ENCODE measurements at regions of chr18 and their contacts with region 1.

Region 1: GRCh38 chr18:37537868-37538525 is 27.6 kb downstream of the CELF4 start:
- DNase-seq: peak; percentile 76 to 87 (median 84)
- ATAC-seq: peak; percentile 96
- H3K4me3 ChIP-seq: no peak overlapping the region
- H3K27ac ChIP-seq: no peak overlapping the region
- H3K4me1 ChIP-seq: peaks cover 0 to 5% of the 10 kb centered on the region in 2 experiments; a peak in 1 of 5 replicates
- H3K27me3 ChIP-seq: peaks cover 0 to 19% of the 10 kb centered on the region in 2 experiments; a peak in 2 of 5 replicates
- CTCF ChIP-seq: peak; percentile 77 to 82 (median 82)
- EP300 ChIP-seq: no peak
- POLR2A ChIP-seq: no peak
- RAD21 ChIP-seq: peak; percentile 49 to 70

Region 2: DNA sequence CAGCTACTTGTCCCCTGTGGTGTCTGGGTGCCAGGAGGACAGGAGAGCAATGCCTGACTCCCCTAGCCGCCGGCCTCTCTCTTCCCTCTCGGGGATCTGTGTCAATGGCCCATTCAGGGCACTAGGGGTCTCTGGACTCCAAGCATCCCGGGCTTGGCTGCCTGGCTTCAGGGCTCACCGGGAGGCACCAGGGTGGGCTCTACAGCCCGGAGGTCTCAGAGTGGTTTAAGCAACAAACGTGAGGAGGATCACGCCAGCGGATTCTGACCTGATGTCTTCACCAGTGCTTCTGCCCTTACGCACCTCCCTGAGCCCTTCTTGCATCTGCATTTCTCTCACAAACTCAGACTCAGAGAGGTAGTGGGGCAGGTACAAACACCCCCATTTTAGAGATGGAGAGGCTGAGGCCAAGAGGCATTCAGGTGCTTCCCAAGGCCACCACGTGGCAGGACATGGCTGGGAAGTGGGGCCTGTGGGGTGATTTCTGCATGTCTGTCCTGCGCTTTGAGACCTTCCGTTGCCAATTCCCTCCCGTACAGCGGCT is 215.4 kb before region 1 on chr18:
- CTCF ChIA-PET with region 1: no interaction called
- POLR2A ChIA-PET with region 1: no interaction called
- in situ Hi-C with region 1: no loop called
- intact Hi-C with region 1: loop called (anchors 10 kb)
- DNase-seq: peak; percentile 68 to 78 (median 74)
- ATAC-seq: peak; percentile 91
- H3K4me3 ChIP-seq: no peak overlapping the region
- H3K27ac ChIP-seq: no peak overlapping the region
- H3K4me1 ChIP-seq: peaks cover 0 to 8% of the 10 kb centered on the region in 2 experiments; a peak in 1 of 5 replicates
- H3K27me3 ChIP-seq: peaks cover 0 to 44% of the 10 kb centered on the region in 2 experiments; a peak in 3 of 5 replicates
- CTCF ChIP-seq: peak; percentile 77 to 94 (median 85)
- EP300 ChIP-seq: no peak
- POLR2A ChIP-seq: no peak
- RAD21 ChIP-seq: peak; percentile 43 to 68

Region 3: GRCh38 chr18:37385846-37386778 is 151.9 kb before region 1 on chr18:
- CTCF ChIA-PET with region 1: interaction called, 6 read pairs
- POLR2A ChIA-PET with region 1: no interaction called
- in situ Hi-C with region 1: loop called (anchors 10 kb)
- intact Hi-C with region 1: loop called (anchors 5 kb)
- DNase-seq: peak; percentile 28 to 58 (median 37)
- ATAC-seq: no peak
- H3K4me3 ChIP-seq: no peak overlapping the region
- H3K27ac ChIP-seq: no peak overlapping the region
- H3K4me1 ChIP-seq: no peaks in the 10 kb centered on the region
- H3K27me3 ChIP-seq: no peaks in the 10 kb centered on the region; a peak in 1 of 5 replicates
- CTCF ChIP-seq: peak; percentile 49 to 82 (median 60); a peak in 4 of 6 replicates
- EP300 ChIP-seq: no peak
- POLR2A ChIP-seq: no peak
- RAD21 ChIP-seq: peak; percentile 73 to 86

Region 4: DNA sequence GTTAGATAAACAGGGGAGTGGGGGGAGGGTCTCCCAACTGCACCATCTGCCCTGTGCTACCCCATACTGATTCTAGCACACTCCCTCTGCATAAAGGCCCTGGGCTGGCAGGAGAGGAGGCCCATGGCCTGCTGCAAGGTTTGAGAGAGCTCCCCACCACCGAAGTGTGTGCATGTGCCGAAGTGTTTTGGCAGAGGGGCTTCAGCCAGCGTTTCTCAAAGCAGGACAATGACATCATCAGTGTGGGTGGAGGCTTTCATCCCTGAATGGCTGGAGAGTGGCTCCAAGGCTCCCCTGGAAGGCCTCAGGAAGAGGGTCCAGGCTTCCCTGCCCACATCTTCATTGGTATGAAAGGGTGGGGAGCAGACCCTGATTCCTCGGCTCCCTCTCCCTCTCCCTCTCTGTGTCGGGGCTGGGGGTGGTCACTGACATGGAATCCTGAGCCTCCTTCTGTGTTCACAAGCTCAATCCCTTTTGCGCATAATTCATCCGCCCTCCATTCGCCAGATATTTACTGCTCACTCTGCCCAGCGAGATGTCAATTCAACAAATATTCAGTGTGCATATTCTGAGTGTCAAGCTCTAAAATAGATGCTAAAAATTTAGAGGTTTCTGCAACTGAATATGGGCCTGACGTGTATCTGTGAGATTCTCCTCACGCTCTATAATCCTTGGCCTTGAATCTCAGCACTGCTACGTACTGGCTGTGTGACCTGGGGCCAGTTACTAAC is 94.5 kb before region 1 on chr18:
- CTCF ChIA-PET with region 1: interaction called, 3 read pairs
- POLR2A ChIA-PET with region 1: no interaction called
- in situ Hi-C with region 1: no loop called
- intact Hi-C with region 1: loop called (anchors 1 kb)
- DNase-seq: no peak
- ATAC-seq: no peak
- H3K4me3 ChIP-seq: no peak overlapping the region
- H3K27ac ChIP-seq: no peak overlapping the region
- H3K4me1 ChIP-seq: no peaks in the 10 kb centered on the region
- H3K27me3 ChIP-seq: no peaks in the 10 kb centered on the region; a peak in 1 of 5 replicates
- CTCF ChIP-seq: no peak
- EP300 ChIP-seq: no peak
- POLR2A ChIP-seq: no peak
- RAD21 ChIP-seq: no peak

Region 5: GRCh38 chr18:37553633-37554395 is 15.8 kb after region 1 on chr18:
- CTCF ChIA-PET with region 1: no interaction called
- POLR2A ChIA-PET with region 1: no interaction called
- in situ Hi-C with region 1: no loop called
- intact Hi-C with region 1: no loop called
- DNase-seq: peak in 3 of 4 experiments; percentile 20 to 37 (median 20)
- ATAC-seq: peak; percentile 83
- H3K4me3 ChIP-seq: no peak overlapping the region
- H3K27ac ChIP-seq: no peak overlapping the region
- H3K4me1 ChIP-seq: no peaks in the 10 kb centered on the region
- H3K27me3 ChIP-seq: no peaks in the 10 kb centered on the region
- CTCF ChIP-seq: peak; percentile 15 to 52 (median 41); a peak in 4 of 6 replicates
- EP300 ChIP-seq: no peak
- POLR2A ChIP-seq: no peak
- RAD21 ChIP-seq: peak in 1 of 2 experiments; percentile 29; a peak in 1 of 4 replicates

Region 6: GRCh38 chr18:37636831-37637477 is 99.0 kb after region 1 on chr18:
- CTCF ChIA-PET with region 1: no interaction called
- POLR2A ChIA-PET with region 1: no interaction called
- in situ Hi-C with region 1: no loop called
- intact Hi-C with region 1: no loop called
- DNase-seq: no peak
- ATAC-seq: no peak
- H3K4me3 ChIP-seq: no peak overlapping the region
- H3K27ac ChIP-seq: no peak overlapping the region
- H3K4me1 ChIP-seq: no peaks in the 10 kb centered on the region
- H3K27me3 ChIP-seq: no peaks in the 10 kb centered on the region
- CTCF ChIP-seq: no peak
- EP300 ChIP-seq: no peak
- POLR2A ChIP-seq: no peak
- RAD21 ChIP-seq: no peak